ENCODE measurements at regions of chr2 and their contacts with region 1.

Region 1: DNA sequence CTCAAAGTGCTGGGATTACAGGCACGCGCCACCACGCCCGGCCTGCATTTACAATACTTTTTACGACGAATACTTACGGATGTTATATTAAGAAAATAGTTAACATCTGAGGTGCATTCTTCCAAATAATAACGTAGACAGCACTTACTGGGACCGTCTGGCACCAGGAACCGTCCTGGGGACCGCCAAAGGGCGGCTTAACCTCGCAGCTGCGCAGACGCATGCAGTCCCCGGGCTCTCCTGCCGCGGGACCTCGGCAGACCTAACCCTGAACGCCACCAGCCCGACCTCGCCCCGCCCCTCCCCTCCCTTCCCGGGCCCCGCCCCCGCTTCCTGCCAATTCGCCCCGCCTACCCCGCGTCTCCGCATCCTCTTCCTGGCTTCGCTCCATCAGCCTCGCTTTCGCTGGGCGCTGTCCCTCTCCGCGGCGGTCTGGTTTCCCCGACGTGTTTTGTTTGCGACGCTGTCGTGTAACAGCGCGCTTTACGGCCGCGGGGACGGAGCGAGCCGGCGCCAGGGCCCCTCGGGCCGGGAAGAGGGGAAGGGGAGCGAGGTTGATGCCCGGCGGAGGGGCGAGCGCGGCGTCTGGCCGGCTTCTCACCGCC is at the start of gene CNOT11:
- DNase-seq: peak; percentile 98
- ATAC-seq: peak; percentile 86
- H3K4me3 Mint-ChIP-seq: peak within 1 kb of the TSS; percentile 91
- H3K27ac Mint-ChIP-seq: peak within 1 kb of the TSS; percentile 94
- H3K4me1 Mint-ChIP-seq: peaks cover 41% of the 10 kb centered on the region
- H3K27me3 Mint-ChIP-seq: no peaks in the 10 kb centered on the region
- CTCF ChIP-seq: no peak
- total RNA-seq, gene CNOT11: 50.8 and 59.7 TPM in 2 replicates

Region 2: GRCh38 chr2:101001691-101002561 is 250.6 kb before region 1 on chr2 and contains the start of gene RPL31:
- CTCF ChIA-PET with region 1: no interaction called
- POLR2A ChIA-PET with region 1: interaction called, 15 read pairs
- intact Hi-C with region 1: loop called (anchors 1 kb)
- DNase-seq: peak; percentile 86
- ATAC-seq: peak; percentile 95
- H3K4me3 Mint-ChIP-seq: peak within 1 kb of the TSS; percentile 97
- H3K27ac Mint-ChIP-seq: peak within 1 kb of the TSS; percentile 95
- H3K4me1 Mint-ChIP-seq: peaks cover 38% of the 10 kb centered on the region
- H3K27me3 Mint-ChIP-seq: no peaks in the 10 kb centered on the region
- CTCF ChIP-seq: no peak
- total RNA-seq, gene RPL31: 1,828 and 2,370 TPM in 2 replicates

Region 3: DNA sequence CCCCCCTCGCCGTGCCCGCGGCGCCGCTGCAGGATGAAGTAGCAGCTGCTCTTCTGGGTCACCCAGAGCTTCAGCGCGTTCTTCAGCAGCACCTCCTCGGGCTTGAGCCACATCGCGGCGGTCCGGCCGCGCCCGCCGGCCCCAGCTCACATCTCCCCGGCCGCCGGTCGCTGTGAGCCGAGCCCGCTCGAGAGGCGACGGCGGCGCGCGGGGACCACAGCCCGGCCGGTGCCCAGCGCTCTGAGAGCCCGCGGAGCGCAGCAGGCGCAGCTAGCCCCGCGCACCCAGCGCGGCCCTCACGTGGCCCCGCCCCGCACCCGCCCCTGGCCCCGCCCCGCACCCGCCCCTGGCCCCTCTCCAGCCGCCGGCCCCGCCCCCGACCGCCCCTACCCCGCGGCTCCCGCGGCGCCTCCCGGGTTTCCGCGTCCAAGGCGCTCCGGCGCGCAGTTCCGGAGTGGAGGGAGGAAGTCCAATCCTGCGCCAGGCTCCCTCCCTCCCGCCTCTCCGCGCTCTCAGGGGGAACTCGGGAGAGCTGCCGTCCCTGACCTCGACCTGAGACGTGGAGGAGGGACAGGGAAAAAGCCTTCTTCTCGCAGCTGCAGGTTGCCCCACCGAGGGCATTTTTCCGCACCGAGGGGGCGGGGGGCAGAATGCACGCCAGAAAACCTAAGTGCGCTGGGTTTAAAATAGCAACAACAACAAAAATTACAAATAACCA is 101.2 kb before region 1 on chr2 and contains the start of gene TBC1D8:
- CTCF ChIA-PET with region 1: no interaction called
- POLR2A ChIA-PET with region 1: interaction called, 3 read pairs
- intact Hi-C with region 1: loop called (anchors 1 kb)
- DNase-seq: peak; percentile 59
- ATAC-seq: peak; percentile 86
- H3K4me3 Mint-ChIP-seq: peak within 1 kb of the TSS; percentile 86
- H3K27ac Mint-ChIP-seq: no peak within 1 kb of the TSS
- H3K4me1 Mint-ChIP-seq: peaks cover 32% of the 10 kb centered on the region
- H3K27me3 Mint-ChIP-seq: peaks cover 31% of the 10 kb centered on the region
- CTCF ChIP-seq: no peak
- total RNA-seq, gene TBC1D8: 3.5 and 4.7 TPM in 2 replicates

Region 4: DNA sequence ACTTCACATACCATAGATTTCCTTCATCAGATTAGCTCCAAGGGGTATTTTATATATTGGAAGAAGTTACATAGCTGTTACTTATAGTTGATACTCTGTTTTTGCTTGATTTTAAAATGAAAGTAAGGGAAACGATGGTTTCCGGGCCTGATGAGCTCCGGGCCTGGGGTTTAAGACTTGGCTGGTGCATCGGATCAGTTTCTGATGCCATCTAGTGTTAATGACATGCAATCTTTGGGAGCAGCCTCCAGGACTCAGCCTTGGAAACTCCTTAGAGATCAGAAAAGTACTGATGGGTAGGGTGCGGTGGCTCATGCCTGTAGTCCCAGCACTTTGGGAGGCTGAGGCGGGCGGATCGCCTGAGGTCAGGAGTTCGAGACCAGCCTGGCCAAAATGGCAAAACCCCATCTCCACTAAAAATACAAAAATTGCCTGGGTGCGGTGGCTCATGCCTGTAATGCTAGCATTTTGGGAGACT is 47.0 kb before region 1 on chr2:
- CTCF ChIA-PET with region 1: interaction called, 5 read pairs
- POLR2A ChIA-PET with region 1: no interaction called
- intact Hi-C with region 1: loop called (anchors 2 kb)
- DNase-seq: no peak
- ATAC-seq: peak; percentile 91
- H3K4me3 Mint-ChIP-seq: peak overlapping the region; percentile 72
- H3K27ac Mint-ChIP-seq: no peak overlapping the region
- H3K4me1 Mint-ChIP-seq: no peaks in the 10 kb centered on the region
- H3K27me3 Mint-ChIP-seq: peaks cover 1% of the 10 kb centered on the region
- CTCF ChIP-seq: peak; percentile 16

Region 5: DNA sequence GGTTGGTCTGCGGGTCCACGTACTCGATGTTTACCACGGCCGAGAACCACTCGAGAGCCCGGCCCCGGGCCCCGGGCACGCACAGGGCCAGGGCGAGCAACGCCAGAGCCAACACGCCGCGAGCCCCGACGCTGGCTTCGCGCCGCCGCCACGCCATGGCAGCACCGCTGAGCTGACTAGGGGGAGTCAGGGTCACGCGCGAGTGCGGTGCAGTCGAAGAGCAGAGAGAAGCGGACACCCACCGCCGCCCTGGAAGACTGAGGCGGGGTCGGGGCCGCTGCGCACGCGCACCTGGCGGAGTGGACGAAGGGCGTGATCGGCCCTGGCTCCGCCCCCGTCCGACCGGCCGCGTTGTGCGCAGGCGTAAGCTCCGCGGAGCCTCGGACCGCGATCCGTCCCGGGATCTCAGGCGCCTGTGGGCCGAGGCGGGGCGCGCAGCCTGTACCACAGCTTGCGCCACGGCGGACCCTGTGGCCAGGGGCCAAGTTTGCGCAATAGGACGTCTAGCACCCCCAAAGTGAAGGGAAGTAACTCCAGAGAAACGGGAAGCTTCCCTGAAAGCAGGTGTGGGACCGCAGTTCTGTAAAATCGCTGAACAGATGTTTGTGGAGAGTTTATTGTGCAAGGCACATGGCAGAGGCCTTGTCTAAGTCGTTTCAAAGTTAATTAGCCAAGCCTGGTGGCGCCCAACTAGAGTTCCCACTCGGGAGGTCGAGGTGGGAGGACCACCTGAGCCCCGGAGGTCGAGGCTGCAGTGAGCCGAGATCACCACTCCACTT is 56.1 kb after region 1 on chr2 and contains the start of gene RNF149:
- CTCF ChIA-PET with region 1: no interaction called
- POLR2A ChIA-PET with region 1: interaction called, 16 read pairs
- intact Hi-C with region 1: loop called (anchors 1 kb)
- DNase-seq: peak; percentile 97
- ATAC-seq: peak; percentile 79
- H3K4me3 Mint-ChIP-seq: peak within 1 kb of the TSS; percentile 85
- H3K27ac Mint-ChIP-seq: peak within 1 kb of the TSS; percentile 90
- H3K4me1 Mint-ChIP-seq: peaks cover 54% of the 10 kb centered on the region
- H3K27me3 Mint-ChIP-seq: no peaks in the 10 kb centered on the region
- CTCF ChIP-seq: no peak
- total RNA-seq, gene RNF149: 39.6 and 48.3 TPM in 2 replicates

Region 6: DNA sequence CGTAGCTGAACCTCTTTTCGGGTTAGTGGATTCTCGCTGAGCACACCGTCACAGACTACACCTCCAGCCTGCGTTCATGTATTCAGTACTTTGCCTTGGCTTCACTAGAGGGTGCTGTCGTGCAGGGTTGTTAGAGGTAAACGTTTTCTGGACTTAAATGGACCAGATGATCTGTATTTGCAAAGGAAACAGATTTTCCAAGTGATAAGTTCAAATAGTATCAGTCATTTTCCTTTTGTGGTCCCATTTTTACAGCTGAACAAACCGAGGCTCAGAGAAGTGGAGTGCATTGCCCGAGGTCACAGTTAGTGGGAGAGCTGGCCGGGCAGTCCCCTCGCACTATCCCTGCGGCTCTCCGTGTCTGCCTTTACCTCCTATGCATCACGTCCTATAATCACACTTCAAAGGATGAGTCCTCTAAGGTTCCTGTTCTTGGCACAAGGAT is 570.9 kb after region 1 on chr2:
- CTCF ChIA-PET with region 1: no interaction called
- POLR2A ChIA-PET with region 1: no interaction called
- intact Hi-C with region 1: no loop called
- DNase-seq: no peak
- ATAC-seq: peak; percentile 86
- H3K4me3 Mint-ChIP-seq: no peak overlapping the region
- H3K27ac Mint-ChIP-seq: peak overlapping the region; percentile 57
- H3K4me1 Mint-ChIP-seq: peaks cover 68% of the 10 kb centered on the region
- H3K27me3 Mint-ChIP-seq: no peaks in the 10 kb centered on the region
- CTCF ChIP-seq: no peak